Esophagus muscularis mucosa (tissue), 4 donors: ENCODE measurements at regions of chr15 and their contacts with region 1.

Region 1: DNA sequence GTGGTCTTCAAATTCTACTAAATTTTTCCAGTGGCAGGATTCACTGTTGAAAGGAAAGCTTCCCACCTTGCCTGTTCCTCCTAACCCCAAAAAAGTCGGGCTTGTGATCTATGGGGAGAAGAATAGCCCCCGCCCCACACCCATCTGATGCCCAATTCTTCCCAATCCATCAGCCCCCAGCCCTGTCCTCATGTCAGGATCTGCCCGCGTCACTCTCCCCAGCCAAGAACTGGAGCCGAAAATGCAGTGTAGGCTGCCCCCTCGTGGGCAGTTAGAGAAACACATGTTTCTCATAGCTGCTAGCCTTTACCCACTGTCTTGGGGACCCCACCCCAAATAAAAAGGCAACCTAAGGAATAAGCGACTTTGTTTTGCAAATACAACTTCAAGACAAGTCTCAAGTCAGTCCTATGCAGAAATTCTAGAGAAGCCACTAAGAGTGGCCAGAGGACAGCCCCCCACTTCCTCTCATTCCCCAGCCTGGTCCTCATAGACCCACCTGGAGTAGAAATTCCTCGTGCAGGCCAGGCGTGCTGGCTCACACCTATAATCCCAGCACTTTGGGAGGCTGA is 13.0 kb upstream of the CSK start:
- DNase-seq: no peak
- H3K4me3 ChIP-seq: peak overlapping the region in 2 of 4 donors; percentile 1 to 2
- H3K27ac ChIP-seq: no peak overlapping the region
- H3K4me1 ChIP-seq: peaks cover 3 to 21% (median 11%) of the 10 kb centered on the region in 4 donors
- H3K27me3 ChIP-seq: peaks cover 0 to 24% (median 0%) of the 10 kb centered on the region in 4 donors
- CTCF ChIP-seq: peak; percentile 74 to 89 (median 85)
- EP300 ChIP-seq: no peak
- POLR2A ChIP-seq: no peak

Region 2: GRCh38 chr15:74373731-74374647 is 394.9 kb before region 1 on chr15:
- intact Hi-C with region 1: loop called (anchors 5 kb)
- DNase-seq: peak; percentile 98
- H3K4me3 ChIP-seq: peak overlapping the region; percentile 59 to 74 (median 70)
- H3K27ac ChIP-seq: peak overlapping the region in 3 of 4 donors; percentile 41 to 54 (median 52)
- H3K4me1 ChIP-seq: peaks cover 9 to 23% (median 19%) of the 10 kb centered on the region in 4 donors
- H3K27me3 ChIP-seq: no peaks in the 10 kb centered on the region
- CTCF ChIP-seq: peak; percentile 85 to 95 (median 88)
- EP300 ChIP-seq: no peak
- POLR2A ChIP-seq: no peak

Region 3: DNA sequence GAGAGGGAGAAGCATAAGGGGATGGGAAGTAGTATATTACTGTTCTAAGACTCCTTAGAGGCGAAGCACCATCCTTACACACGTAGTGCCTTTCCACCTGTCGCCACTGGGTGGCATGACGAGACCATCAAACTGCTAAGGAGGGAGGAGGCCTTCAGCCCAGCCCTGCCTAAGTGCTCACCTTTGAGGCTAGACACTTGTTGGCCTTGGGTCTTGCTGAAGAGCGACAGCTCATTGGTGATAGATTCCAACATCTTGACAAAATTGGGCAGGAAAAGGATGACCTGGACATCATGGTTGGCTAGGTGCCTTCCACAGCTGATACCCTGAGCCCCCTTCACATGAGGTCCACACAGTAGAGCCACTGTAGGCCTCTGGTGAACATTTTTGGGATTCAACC is 133.6 kb before region 1 on chr15:
- intact Hi-C with region 1: loop called (anchors 1 kb)
- DNase-seq: no peak
- H3K4me3 ChIP-seq: no peak overlapping the region
- H3K27ac ChIP-seq: no peak overlapping the region
- H3K4me1 ChIP-seq: peaks cover 0 to 8% (median 0%) of the 10 kb centered on the region in 4 donors
- H3K27me3 ChIP-seq: no peaks in the 10 kb centered on the region
- CTCF ChIP-seq: peak; percentile 77 to 85 (median 79)
- EP300 ChIP-seq: no peak
- POLR2A ChIP-seq: no peak

Region 4: DNA sequence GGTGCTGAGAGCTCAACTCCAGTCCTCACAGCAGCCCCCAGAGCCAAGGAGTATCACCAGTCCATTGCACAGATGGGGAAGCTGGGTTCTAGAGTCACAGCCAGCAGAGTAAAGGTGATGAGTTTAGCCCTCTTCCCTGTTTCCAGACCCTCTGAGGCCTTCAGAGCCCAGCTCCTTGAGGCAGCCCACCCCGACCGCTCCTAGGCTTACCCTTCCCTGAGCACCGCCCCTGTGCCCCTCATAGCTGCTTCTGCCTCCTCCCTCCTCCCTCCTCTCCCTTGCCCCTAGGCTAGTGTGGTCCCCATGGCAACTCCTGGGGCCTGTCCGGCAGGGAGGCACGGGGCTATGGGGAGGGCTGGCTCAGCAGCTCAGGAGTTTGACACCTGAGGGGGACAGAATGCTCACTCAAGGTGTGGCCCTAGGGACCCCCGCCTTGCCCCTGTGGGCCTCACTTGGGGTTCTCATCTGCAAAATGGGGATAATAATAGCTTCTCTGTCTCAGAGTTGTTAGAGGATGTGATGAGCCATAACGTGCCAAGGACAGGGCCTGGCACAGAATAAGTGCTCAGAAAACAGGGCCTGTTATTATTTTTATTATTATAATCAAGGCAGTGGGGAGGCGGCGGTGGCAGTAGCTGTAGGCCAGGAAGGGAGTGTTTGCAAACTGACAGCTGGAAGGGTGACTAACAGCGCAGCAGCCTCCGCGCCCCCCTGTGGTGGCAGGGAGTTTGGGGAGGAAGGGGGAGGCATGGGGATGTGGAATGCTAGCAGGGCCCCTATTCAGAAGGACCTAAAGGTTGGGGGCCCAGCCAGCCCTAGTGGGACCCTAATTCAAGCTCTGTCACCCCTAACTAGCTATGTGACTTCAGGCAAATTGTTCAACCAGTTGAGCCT is 24.5 kb after region 1 on chr15:
- intact Hi-C with region 1: loop called (anchors 2 kb)
- DNase-seq: no peak
- H3K4me3 ChIP-seq: no peak overlapping the region
- H3K27ac ChIP-seq: no peak overlapping the region
- H3K4me1 ChIP-seq: peaks cover 44 to 61% (median 56%) of the 10 kb centered on the region in 4 donors
- H3K27me3 ChIP-seq: no peaks in the 10 kb centered on the region
- CTCF ChIP-seq: peak in 1 of 3 experiments; percentile 3
- EP300 ChIP-seq: no peak
- POLR2A ChIP-seq: no peak

Region 5: DNA sequence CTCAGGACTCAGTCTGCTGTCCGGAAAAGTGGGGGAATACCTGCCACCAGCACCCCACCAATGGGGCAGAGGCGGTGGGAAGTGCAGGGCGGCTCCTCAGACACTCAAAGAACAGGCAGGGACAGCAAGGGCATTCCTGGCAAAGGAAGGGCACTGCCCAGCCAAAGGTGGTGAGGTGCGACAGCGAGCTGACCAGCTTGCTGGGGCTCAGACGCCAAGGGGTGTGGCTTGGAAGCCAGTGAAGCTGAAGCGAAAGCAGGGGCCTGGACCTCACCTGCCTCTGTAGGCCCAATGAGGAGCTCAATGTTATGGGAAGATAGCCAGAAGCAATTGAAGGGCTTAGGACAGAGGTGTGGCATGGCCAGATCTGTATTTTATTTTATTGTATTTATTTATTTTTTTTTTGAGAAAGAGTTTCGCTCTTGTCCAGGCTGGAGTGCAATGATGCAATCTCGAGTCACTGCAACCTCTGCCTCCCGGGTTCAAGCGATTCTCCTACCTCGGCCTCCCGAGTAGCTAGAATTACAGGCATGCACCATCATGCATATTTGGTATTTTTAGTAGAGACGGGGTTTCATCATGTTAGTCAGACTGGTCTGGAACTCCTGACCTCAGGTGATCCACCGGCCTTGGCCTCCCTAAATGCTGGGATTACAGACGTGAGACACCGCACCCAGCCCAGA is 39.4 kb after region 1 on chr15:
- intact Hi-C with region 1: loop called (anchors 5 kb)
- DNase-seq: no peak
- H3K4me3 ChIP-seq: no peak overlapping the region
- H3K27ac ChIP-seq: no peak overlapping the region
- H3K4me1 ChIP-seq: peaks cover 0 to 4% (median 0%) of the 10 kb centered on the region in 4 donors
- H3K27me3 ChIP-seq: peaks cover 0 to 15% (median 0%) of the 10 kb centered on the region in 4 donors
- CTCF ChIP-seq: no peak
- EP300 ChIP-seq: no peak
- POLR2A ChIP-seq: no peak

Region 6: GRCh38 chr15:74950078-74951000 is 181.5 kb after region 1 on chr15:
- intact Hi-C with region 1: loop called (anchors 1 kb)
- DNase-seq: no peak
- H3K4me3 ChIP-seq: no peak overlapping the region
- H3K27ac ChIP-seq: no peak overlapping the region
- H3K4me1 ChIP-seq: peaks cover under 1 to 17% (median 14%) of the 10 kb centered on the region in 4 donors
- H3K27me3 ChIP-seq: no peaks in the 10 kb centered on the region
- CTCF ChIP-seq: peak; percentile 95 to 99 (median 98)
- EP300 ChIP-seq: no peak
- POLR2A ChIP-seq: no peak